ENCODE measurements at regions of chrX and their contacts with region 1.

Region 1: GRCh38 chrX:37846934-37847732 is at the start of gene DYNLT3:
- DNase-seq: no peak
- H3K4me3 ChIP-seq: no peak within 1 kb of the TSS
- H3K27ac ChIP-seq: no peak within 1 kb of the TSS
- H3K4me1 ChIP-seq: no peaks in the 10 kb centered on the region
- CTCF ChIP-seq: no peak
- total RNA-seq, gene DYNLT3: 0.08 and 0.73 TPM in 2 replicates

Region 2: GRCh38 chrX:37509349-37509748 is 337.8 kb before region 1 on chrX:
- CTCF ChIA-PET with region 1: no interaction called
- POLR2A ChIA-PET with region 1: no interaction called
- intact Hi-C with region 1: loop called (anchors 10 kb)
- DNase-seq: peak; percentile 4
- H3K4me3 ChIP-seq: no peak overlapping the region
- H3K27ac ChIP-seq: no peak overlapping the region
- H3K4me1 ChIP-seq: no peaks in the 10 kb centered on the region
- CTCF ChIP-seq: peak; percentile 60

Region 3: DNA sequence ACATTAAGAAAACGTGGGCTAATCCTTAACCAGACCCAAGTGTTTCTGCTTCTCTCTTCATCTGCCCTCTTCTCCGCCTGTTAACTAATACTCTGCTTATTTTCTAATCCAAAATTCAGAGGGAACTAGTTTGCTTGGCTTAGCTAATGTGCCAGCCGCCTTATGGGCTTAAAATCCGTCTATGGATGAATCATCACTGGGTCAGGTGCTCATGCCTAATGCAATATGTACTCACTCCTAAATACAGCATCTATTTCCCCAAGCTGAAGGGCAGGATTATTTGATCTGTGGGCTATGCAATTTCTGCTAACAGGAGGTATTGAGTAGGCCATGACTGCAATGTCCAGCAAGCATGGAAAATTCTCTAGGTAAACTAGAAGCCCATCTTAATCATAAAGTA is 12.2 kb before region 1 on chrX:
- CTCF ChIA-PET with region 1: no interaction called
- POLR2A ChIA-PET with region 1: no interaction called
- intact Hi-C with region 1: no loop called
- DNase-seq: no peak
- H3K4me3 ChIP-seq: no peak overlapping the region
- H3K27ac ChIP-seq: no peak overlapping the region
- H3K4me1 ChIP-seq: no peaks in the 10 kb centered on the region
- CTCF ChIP-seq: no peak

Region 4: GRCh38 chrX:38365954-38366353 is 518.8 kb after region 1 on chrX:
- CTCF ChIA-PET with region 1: no interaction called
- POLR2A ChIA-PET with region 1: no interaction called
- intact Hi-C with region 1: no loop called
- DNase-seq: peak; percentile 31
- H3K4me3 ChIP-seq: no peak overlapping the region
- H3K27ac ChIP-seq: no peak overlapping the region
- H3K4me1 ChIP-seq: peaks cover 18% of the 10 kb centered on the region
- CTCF ChIP-seq: no peak